ENCODE measurements at regions of chr18 and their contacts with region 1.

Region 1: GRCh38 chr18:63578357-63578958 is 8.7 kb upstream of the SERPINB13 start:
- DNase-seq: peak; percentile 17
- ATAC-seq: no peak
- H3K4me3 ChIP-seq: no peak overlapping the region
- H3K27ac ChIP-seq: no peak overlapping the region
- H3K4me1 ChIP-seq: no peaks in the 10 kb centered on the region
- H3K27me3 ChIP-seq: no peaks in the 10 kb centered on the region
- CTCF ChIP-seq: peak; percentile 56; the same call in 1 of the 2 replicates

Region 2: GRCh38 chr18:63848159-63848558 is 269.7 kb after region 1 on chr18:
- CTCF ChIA-PET with region 1: no interaction called
- POLR2A ChIA-PET with region 1: no interaction called
- in situ Hi-C with region 1: no loop called
- intact Hi-C with region 1: loop called (anchors 10 kb)
- DNase-seq: no peak
- ATAC-seq: peak; percentile 65; the same call in 1 of the 2 replicates
- H3K4me3 ChIP-seq: no peak overlapping the region
- H3K27ac ChIP-seq: no peak overlapping the region
- H3K4me1 ChIP-seq: no peaks in the 10 kb centered on the region
- H3K27me3 ChIP-seq: no peaks in the 10 kb centered on the region
- CTCF ChIP-seq: peak; percentile 54

Region 3: GRCh38 chr18:63882333-63883141 is 304.1 kb after region 1 on chr18:
- CTCF ChIA-PET with region 1: no interaction called
- POLR2A ChIA-PET with region 1: no interaction called
- in situ Hi-C with region 1: no loop called
- intact Hi-C with region 1: no loop called
- DNase-seq: no peak
- ATAC-seq: no peak
- H3K4me3 ChIP-seq: no peak overlapping the region
- H3K27ac ChIP-seq: no peak overlapping the region
- H3K4me1 ChIP-seq: no peaks in the 10 kb centered on the region
- H3K27me3 ChIP-seq: no peaks in the 10 kb centered on the region
- CTCF ChIP-seq: no peak

Region 4: GRCh38 chr18:63997606-63998005 is 419.1 kb after region 1 on chr18:
- CTCF ChIA-PET with region 1: no interaction called
- POLR2A ChIA-PET with region 1: no interaction called
- in situ Hi-C with region 1: no loop called
- intact Hi-C with region 1: no loop called
- DNase-seq: no peak
- ATAC-seq: no peak
- H3K4me3 ChIP-seq: no peak overlapping the region
- H3K27ac ChIP-seq: no peak overlapping the region
- H3K4me1 ChIP-seq: no peaks in the 10 kb centered on the region
- H3K27me3 ChIP-seq: no peaks in the 10 kb centered on the region
- CTCF ChIP-seq: no peak